Calu3 (cell line): ENCODE measurements at regions of chr1 and their contacts with region 1.

Region 1: DNA sequence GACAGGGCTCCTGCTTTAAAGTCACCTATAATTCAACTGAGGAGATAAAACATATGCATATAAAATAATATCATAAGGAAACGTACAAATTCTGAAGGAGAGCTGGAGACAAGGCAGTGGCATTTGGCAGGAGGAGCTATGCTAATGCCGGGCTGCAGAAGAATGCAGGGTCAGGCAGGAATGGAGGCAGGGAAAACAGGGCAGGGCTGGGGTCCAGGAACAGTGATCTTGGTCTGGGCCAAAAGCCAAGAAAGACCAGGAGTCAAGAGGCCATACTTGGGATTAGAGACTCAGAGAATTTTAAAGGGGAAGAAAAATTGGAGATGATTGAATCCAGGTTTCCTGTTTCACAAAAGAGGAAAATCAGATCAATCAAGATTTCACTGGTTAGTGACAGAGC is 20.0 kb upstream of the BRDT start:
- DNase-seq: peak; percentile 16
- H3K4me3 Mint-ChIP-seq: no peak overlapping the region
- H3K27ac Mint-ChIP-seq: no peak overlapping the region
- H3K4me1 Mint-ChIP-seq: peaks cover 17% of the 10 kb centered on the region
- H3K27me3 Mint-ChIP-seq: no peaks in the 10 kb centered on the region
- CTCF ChIP-seq: no peak

Region 2: DNA sequence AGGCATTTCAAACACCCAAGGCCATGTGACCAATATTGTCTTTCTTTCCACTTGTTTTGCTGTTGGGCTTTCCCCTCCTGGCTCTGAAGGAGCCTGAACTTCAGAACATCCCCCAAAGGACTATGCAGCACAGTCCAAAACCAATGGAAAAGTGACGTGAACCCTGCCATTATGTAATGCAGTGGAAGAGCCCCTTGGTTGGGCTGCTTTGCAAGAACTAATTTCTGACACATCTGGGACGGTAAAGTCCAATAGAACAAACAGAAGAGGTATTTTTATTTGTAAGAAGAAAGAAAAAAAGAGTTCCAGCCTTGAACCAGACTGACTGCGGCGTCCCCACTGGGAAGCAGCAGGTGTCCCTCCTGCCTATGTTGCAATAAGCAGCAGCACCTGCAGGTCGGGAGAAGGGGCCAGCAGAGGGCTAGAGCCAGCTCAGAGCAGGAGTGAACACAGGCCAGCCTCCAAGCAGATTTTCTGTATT is 311.9 kb before region 1 on chr1:
- CTCF ChIA-PET with region 1: interaction called, 6 read pairs
- intact Hi-C with region 1: loop called (anchors 5 kb)
- DNase-seq: peak; percentile 69
- H3K4me3 Mint-ChIP-seq: no peak overlapping the region
- H3K27ac Mint-ChIP-seq: no peak overlapping the region
- H3K4me1 Mint-ChIP-seq: peaks cover 29% of the 10 kb centered on the region
- H3K27me3 Mint-ChIP-seq: no peaks in the 10 kb centered on the region
- CTCF ChIP-seq: no peak